Gastrocnemius medialis (tissue), 4 donors: ENCODE measurements at regions of chr17 and their contacts with region 1.

Region 1: DNA sequence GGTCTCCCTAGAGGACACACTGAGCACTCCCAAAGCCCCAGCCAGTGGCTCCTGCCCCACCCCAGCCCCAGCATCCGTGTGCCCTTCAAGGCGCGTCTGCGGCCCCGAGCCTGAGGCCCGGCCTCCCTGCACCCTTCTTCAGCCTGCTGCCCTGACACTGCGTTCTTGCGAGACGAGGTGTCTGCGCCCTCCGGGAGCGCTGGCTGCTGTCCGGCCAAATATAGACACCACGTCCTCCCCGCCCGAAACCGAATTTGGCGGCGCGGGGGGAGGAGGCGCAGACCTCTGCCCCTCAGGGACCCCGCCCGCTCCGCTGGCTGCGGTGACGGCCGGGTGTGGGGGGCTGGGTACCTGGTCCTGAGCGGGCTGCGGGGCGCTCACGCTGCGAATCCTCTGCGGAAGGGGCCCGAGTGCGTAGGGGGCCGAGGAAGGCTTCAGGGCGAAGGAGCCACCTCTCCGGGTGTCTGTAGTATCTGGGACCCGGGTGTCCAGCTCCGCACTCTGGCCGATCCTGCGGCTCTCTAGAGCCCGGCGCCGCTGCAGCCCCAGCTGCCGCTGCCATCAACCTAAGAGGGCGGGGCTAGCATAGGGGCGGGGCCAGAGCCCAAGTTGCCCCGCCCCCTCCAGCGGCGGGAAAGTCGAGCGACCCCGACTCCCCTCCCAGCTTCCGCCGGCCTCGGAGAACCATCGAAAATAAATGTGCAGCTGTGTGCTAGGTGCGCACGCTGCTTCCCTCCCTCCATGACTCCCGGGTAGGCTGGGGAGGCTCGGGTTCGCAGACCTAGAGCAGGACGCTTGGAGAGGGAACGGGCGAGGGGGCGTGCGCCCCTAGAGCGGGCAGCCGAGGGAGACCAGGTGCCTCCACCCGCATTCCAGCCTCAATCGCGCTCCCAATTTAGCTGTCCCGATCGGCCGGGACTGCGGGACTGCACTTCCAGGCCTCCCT is at the start of gene CORO6:
- DNase-seq: peak; percentile 64 to 83
- ATAC-seq: peak; percentile 39 to 54
- H3K4me3 ChIP-seq: peak within 1 kb of the TSS; percentile 89 to 99 (median 96)
- H3K27ac ChIP-seq: peak within 1 kb of the TSS; percentile 98 to 100 (median 99)
- H3K4me1 ChIP-seq: peaks cover 62 to 65% of the 10 kb centered on the region in 2 donors
- H3K27me3 ChIP-seq: no peaks in the 10 kb centered on the region
- CTCF ChIP-seq: no peak
- POLR2A ChIP-seq: peak; percentile 99
- total RNA-seq, gene CORO6: 409 to 694 (median 563) TPM

Region 2: DNA sequence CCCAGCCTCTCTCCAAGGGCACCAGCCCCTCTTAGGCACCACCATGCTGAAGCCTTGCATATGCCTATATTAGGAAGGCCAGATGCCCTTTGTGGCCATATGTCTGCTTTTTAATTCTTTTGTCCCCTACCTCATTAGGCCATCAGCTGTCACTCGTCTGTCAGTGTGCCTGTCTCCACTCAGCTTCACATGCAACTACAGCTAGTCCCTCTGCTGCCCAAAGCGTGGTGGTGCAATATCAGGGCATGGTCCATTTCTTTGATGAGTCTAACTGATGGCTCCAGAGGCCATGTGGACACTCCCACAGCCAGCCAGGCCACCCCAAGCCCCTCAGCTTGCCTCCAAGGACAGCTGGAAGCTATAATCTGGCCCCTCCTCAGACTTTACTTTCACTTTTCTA is 478.7 kb before region 1 on chr17:
- in situ Hi-C with region 1: no loop called
- intact Hi-C with region 1: loop called (anchors 10 kb)
- DNase-seq: peak in 1 of 2 donors; percentile 82
- ATAC-seq: peak in 1 of 2 donors; percentile 34
- H3K4me3 ChIP-seq: no peak overlapping the region
- H3K27ac ChIP-seq: peak overlapping the region; percentile 76 to 98 (median 90)
- H3K4me1 ChIP-seq: peaks cover 44 to 53% of the 10 kb centered on the region in 2 donors
- H3K27me3 ChIP-seq: no peaks in the 10 kb centered on the region
- CTCF ChIP-seq: peak; percentile 44 to 51 (median 48)
- POLR2A ChIP-seq: no peak

Region 3: GRCh38 chr17:29608891-29609361 is 13.7 kb before region 1 on chr17:
- in situ Hi-C with region 1: no loop called
- intact Hi-C with region 1: no loop called
- DNase-seq: peak; percentile 1 to 63
- ATAC-seq: peak in 1 of 2 donors; percentile 17
- H3K4me3 ChIP-seq: no peak overlapping the region
- H3K27ac ChIP-seq: peak overlapping the region in 2 of 4 donors; percentile 18 to 43
- H3K4me1 ChIP-seq: peaks cover 8 to 11% of the 10 kb centered on the region in 2 donors
- H3K27me3 ChIP-seq: no peaks in the 10 kb centered on the region
- CTCF ChIP-seq: no peak
- POLR2A ChIP-seq: no peak

Region 4: DNA sequence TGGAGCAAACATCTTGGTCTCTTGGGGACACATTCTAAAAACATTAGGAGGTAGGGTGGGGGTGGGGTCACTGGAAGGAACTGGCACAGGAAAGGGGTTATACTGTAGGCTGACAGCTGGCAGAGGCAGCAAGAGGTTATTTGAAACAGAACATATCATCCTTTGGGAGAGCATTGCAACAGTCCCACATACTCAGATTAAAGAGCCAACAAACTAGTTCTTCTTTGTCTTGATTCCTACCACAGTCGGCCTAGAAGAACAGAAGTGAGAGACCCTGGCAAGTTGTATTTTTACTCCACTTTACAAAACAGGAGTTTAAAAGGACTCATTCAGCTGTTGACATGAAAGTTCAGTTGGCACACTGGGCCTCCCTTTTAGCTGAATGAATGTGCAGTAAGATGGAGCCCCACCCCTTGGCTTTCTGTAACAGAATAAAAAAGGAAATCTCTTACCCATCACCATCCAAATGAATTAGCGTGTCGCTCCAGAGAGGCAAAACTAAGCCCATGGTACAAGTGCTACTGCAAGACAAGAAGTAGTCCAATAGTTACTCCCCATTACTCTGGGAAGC is 54.7 kb after region 1 on chr17:
- in situ Hi-C with region 1: no loop called
- intact Hi-C with region 1: loop called (anchors 5 kb)
- DNase-seq: peak; percentile 89 to 94
- ATAC-seq: peak; percentile 89 to 91
- H3K4me3 ChIP-seq: peak overlapping the region; percentile 14 to 67 (median 49)
- H3K27ac ChIP-seq: peak overlapping the region; percentile 97 to 100 (median 98)
- H3K4me1 ChIP-seq: peaks cover 56 to 60% of the 10 kb centered on the region in 2 donors
- H3K27me3 ChIP-seq: no peaks in the 10 kb centered on the region
- CTCF ChIP-seq: no peak
- POLR2A ChIP-seq: peak; percentile 18 to 41

Region 5: DNA sequence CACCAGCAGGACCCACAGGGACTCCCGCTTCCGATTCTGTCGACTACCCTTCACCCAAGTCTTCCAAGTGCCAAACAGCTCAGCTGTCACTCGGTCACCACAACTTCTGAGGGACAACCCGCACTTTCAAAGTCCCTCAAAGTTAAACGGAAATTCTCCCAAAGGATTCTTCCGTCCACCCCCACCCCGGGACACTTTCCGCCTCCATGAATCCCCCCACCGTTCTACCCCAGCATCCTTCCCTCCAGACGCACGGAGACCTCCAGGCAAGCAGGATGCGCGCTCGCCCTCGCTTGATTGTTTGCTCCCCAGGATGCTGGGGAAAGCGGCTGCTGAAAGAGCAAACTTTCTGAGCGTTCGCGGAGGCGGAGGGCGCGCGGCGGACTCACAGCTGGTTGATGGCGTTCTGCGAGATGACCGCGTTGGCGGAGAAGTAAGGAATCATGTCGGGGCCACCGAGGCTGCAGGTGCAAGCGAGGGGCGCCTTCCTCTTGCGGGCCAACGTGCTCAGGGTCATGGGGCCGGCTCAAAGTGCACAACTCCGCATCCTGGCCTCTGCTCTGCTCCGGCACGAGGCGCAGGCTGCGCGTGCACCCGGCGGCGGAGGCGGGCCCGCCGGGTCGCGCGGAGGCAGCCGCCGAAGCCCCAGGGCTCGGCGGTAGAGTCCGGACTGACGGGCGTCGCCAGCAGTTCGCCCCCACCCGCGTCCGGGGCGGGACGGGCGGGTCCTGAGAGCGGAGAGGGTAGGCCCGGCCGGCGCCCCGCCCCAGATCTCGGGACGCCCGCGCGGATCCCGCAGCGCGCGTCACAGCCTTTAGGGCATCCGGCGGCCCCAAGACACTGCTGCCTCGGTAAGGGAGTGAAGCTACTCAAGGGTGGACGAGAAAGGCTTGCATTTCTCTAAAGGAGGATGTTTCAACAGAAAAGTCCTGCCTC is 138.4 kb after region 1 on chr17:
- in situ Hi-C with region 1: no loop called
- intact Hi-C with region 1: loop called (anchors 5 kb)
- DNase-seq: peak; percentile 84 to 91
- ATAC-seq: peak; percentile 77 to 80
- H3K4me3 ChIP-seq: peak overlapping the region; percentile 68 to 88 (median 78)
- H3K27ac ChIP-seq: peak overlapping the region; percentile 90 to 97 (median 93)
- H3K4me1 ChIP-seq: peaks cover 33 to 52% of the 10 kb centered on the region in 2 donors
- H3K27me3 ChIP-seq: no peaks in the 10 kb centered on the region
- CTCF ChIP-seq: peak in 1 of 5 experiments; percentile 6
- POLR2A ChIP-seq: peak; percentile 92 to 96

Region 6: GRCh38 chr17:29771551-29771950 is 148.9 kb after region 1 on chr17:
- in situ Hi-C with region 1: loop called in 1 of 4 experiments (anchors 10 kb)
- intact Hi-C with region 1: no loop called
- DNase-seq: no peak
- ATAC-seq: no peak
- H3K4me3 ChIP-seq: no peak overlapping the region
- H3K27ac ChIP-seq: peak overlapping the region; percentile 70 to 84 (median 79)
- H3K4me1 ChIP-seq: peaks cover 14 to 21% of the 10 kb centered on the region in 2 donors
- H3K27me3 ChIP-seq: no peaks in the 10 kb centered on the region
- CTCF ChIP-seq: no peak
- POLR2A ChIP-seq: no peak